ENCODE measurements at regions of chr18 and their contacts with region 1.

Region 1: DNA sequence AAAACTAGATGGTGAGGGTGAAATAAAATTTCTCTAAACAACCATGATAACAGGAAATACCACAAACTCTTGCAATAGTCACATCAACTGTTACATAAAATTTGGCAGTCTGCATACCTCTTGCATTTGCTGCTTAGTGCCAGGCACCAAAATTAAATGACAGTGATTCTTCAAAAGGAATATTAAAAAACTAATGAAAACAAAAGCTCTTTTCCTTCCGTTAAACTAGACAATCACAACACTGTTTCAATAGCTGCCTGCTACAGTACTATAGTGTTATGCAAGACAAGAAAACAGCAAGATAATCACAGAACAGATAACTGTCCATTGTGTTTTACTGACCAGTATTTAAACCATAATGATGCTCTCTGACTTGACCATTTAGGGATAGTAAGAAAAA is 239.0 kb upstream of the SMAD7 start:
- DNase-seq: no peak
- H3K4me3 ChIP-seq: no peak overlapping the region
- H3K27ac ChIP-seq: no peak overlapping the region
- H3K4me1 ChIP-seq: no peaks in the 10 kb centered on the region
- H3K27me3 ChIP-seq: no peaks in the 10 kb centered on the region
- CTCF ChIP-seq: no peak
- POLR2A ChIP-seq: no peak

Region 2: DNA sequence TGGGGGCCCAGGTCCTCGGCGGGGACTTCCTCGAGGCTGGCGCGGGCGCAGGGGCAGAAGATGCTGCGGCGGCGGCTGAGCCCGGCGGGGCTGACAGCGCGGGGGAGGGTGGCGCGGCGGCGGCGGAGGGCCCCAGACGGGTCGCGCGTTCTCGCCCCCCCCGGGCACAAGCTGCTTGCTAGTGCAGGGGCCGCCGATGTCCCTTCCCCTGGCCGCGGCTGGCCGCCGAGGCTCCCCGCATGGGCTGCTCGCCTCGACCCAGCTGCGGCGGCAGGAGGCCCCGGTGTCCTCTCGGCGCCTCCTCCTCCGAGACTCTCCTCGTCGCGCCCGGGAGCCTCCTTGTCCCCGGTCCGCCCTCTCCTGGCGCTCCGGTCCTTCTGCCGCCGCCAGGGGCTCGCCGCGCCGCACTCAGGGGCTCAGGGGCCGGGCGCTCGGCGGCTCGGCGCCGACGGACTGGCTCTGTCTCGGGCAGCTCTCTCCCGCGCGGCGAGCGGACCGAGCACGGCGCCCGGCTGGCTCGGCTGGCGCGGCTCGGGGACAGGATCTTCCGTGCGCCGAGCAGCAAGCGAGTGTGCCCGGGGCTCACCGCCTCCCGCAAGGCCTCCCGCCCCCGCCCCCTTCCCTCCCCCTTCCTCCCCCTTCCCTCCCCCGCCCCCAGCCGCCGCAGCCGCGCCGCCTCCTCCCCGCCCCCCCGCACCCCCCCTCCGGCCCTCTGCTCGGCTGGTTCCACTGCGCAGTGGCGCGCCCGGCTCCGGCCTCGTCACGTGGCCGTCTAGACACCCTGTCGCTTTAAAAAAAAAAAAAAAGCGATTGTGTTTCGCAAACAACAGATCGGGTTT is 238.1 kb before region 1 on chr18:
- intact Hi-C with region 1: loop called (anchors 10 kb)
- DNase-seq: peak; percentile 85
- H3K4me3 ChIP-seq: peak overlapping the region; percentile 70 to 93
- H3K27ac ChIP-seq: peak overlapping the region; percentile 98 to 99
- H3K4me1 ChIP-seq: peaks cover 3% of the 10 kb centered on the region
- H3K27me3 ChIP-seq: no peaks in the 10 kb centered on the region
- CTCF ChIP-seq: peak in 2 of 4 experiments; percentile 35 to 36
- POLR2A ChIP-seq: peak; percentile 89

Region 3: GRCh38 chr18:49055754-49056172 is 134.0 kb before region 1 on chr18:
- intact Hi-C with region 1: loop called (anchors 10 kb)
- DNase-seq: no peak
- H3K4me3 ChIP-seq: no peak overlapping the region
- H3K27ac ChIP-seq: no peak overlapping the region
- H3K4me1 ChIP-seq: no peaks in the 10 kb centered on the region
- H3K27me3 ChIP-seq: no peaks in the 10 kb centered on the region
- CTCF ChIP-seq: no peak
- POLR2A ChIP-seq: no peak

Region 4: GRCh38 chr18:49238433-49239042 is 48.8 kb after region 1 on chr18:
- intact Hi-C with region 1: no loop called
- DNase-seq: no peak
- H3K4me3 ChIP-seq: no peak overlapping the region
- H3K27ac ChIP-seq: no peak overlapping the region
- H3K4me1 ChIP-seq: no peaks in the 10 kb centered on the region
- H3K27me3 ChIP-seq: no peaks in the 10 kb centered on the region
- CTCF ChIP-seq: peak in 2 of 4 experiments; percentile 28 to 38
- POLR2A ChIP-seq: no peak